ENCODE measurements at regions of chr7 and their contacts with region 1.

Region 1: DNA sequence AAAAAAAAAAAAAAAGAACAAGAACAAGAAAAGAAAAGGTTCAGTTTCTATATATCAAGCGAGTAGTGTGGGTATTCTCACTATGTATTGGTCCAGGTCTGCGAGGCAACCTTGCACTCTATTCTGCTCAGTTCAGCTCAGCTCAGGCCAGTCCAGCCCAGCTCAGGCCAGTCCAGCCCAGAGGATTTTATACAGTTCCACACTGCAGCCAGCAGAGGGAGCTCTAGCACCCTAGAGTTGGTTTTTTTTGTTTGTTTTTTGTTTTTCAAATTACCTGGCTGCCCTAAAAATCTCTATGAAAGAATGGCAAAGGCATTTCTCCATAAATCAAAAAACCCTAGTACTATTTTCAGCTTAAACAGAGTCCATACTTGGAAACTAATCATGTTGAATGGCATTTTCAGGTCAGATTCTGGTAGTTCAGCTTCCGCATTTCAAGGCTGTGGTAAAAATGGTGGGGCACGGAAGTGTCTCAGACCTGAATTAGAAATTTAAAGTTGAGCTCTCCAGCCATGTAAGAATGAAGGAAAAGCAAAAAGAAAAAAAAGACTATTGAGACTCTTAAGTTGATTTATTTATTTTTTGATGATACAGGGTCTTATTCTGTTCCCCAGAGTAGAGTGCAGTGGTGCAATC is 55.2 kb upstream of the GSDME start:
- DNase-seq: peak; percentile 25 to 49 (median 38)
- H3K4me3 ChIP-seq: no peak overlapping the region
- H3K4me3 Mint-ChIP-seq: no peak overlapping the region
- H3K27ac ChIP-seq: no peak overlapping the region
- H3K27ac Mint-ChIP-seq: peak overlapping the region in 2 of 7 donors; percentile 22 to 23
- H3K4me1 ChIP-seq: no peaks in the 10 kb centered on the region
- H3K4me1 Mint-ChIP-seq: peaks cover 0 to 3% (median under 1%) of the 10 kb centered on the region in 4 donors
- H3K27me3 ChIP-seq: no peaks in the 10 kb centered on the region
- H3K27me3 Mint-ChIP-seq: no peaks in the 10 kb centered on the region

Region 2: GRCh38 chr7:24800667-24801066 is 11.8 kb before region 1 on chr7:
- CTCF ChIA-PET with region 1: interaction called, 47 read pairs
- POLR2A ChIA-PET with region 1: no interaction called
- intact Hi-C with region 1: no loop called
- DNase-seq: no peak
- H3K4me3 ChIP-seq: no peak overlapping the region
- H3K4me3 Mint-ChIP-seq: peak overlapping the region in 1 of 8 donors; percentile 40
- H3K27ac ChIP-seq: no peak overlapping the region
- H3K27ac Mint-ChIP-seq: peak overlapping the region in 1 of 7 donors; percentile 13
- H3K4me1 ChIP-seq: peaks cover 4% of the 10 kb centered on the region
- H3K4me1 Mint-ChIP-seq: peaks cover 7 to 12% (median 8%) of the 10 kb centered on the region in 4 donors
- H3K27me3 ChIP-seq: no peaks in the 10 kb centered on the region
- H3K27me3 Mint-ChIP-seq: no peaks in the 10 kb centered on the region

Region 3: DNA sequence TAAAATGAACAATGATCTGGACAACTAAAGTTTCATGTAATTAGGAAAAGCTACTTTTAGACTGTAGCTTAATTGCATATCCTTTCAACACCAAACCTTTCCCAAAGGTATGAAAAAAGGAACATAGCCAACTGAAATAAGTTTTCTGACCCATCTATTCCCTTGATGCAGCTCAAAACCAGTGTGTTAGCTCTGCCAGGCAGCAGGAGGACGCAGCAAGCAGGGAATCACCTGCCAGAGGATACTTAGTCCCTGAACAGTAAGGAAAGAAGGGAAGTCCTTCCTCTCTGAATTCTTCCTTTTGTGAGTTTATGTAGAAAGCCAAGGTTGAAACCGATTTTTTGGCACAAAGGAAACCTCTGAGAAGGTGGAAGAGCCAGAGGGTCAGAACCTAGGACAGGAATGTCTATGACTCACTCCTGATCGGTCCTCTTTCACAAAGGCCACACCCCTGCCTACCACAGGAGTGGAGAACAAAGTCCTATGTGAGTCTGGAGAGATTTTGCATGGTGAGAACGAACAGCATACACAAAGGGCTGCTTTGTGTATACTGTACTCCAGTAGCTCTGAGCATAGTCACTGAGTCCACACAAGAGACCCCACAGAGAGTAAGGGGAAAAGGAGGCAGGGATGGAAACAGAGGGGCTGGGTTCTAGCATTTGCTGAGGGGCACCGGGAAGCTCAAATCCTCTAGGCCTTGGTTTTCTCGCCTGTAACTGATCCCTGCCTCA is 13.7 kb after region 1 on chr7:
- CTCF ChIA-PET with region 1: interaction called, 36 read pairs
- POLR2A ChIA-PET with region 1: interaction called, 4 read pairs
- intact Hi-C with region 1: no loop called
- DNase-seq: no peak
- H3K4me3 ChIP-seq: peak overlapping the region in 1 of 2 donors; percentile 21
- H3K4me3 Mint-ChIP-seq: peak overlapping the region in 7 of 8 donors; percentile 56 to 89 (median 76)
- H3K27ac ChIP-seq: peak overlapping the region; percentile 45
- H3K27ac Mint-ChIP-seq: peak overlapping the region; percentile 87 to 96 (median 91)
- H3K4me1 ChIP-seq: peaks cover 62% of the 10 kb centered on the region
- H3K4me1 Mint-ChIP-seq: peaks cover 51 to 72% (median 65%) of the 10 kb centered on the region in 4 donors
- H3K27me3 ChIP-seq: no peaks in the 10 kb centered on the region
- H3K27me3 Mint-ChIP-seq: no peaks in the 10 kb centered on the region

Region 4: DNA sequence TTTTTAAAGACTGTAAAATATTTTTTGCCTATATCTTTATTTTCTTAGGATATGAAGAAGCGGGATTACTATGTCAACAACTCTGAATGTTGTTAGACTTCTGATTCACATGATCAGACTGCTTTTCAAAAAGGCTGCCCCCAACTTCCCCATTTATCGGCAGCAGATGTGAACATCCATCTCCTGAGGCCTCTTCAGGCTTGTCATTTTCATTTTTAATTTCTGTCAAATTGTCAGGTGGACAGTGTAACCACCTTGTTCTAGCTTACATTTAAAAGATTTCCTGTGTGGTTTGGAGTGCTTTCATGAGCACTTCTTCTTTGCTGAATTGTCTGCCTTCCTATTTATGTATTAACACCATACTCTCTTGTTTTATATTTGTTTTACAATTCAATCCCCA is 23.7 kb after region 1 on chr7:
- CTCF ChIA-PET with region 1: interaction called, 19 read pairs
- POLR2A ChIA-PET with region 1: no interaction called
- intact Hi-C with region 1: no loop called
- DNase-seq: peak in 4 of 5 donors; percentile 16 to 25 (median 20)
- H3K4me3 ChIP-seq: no peak overlapping the region
- H3K4me3 Mint-ChIP-seq: peak overlapping the region; percentile 1 to 76 (median 53)
- H3K27ac ChIP-seq: no peak overlapping the region
- H3K27ac Mint-ChIP-seq: peak overlapping the region; percentile 7 to 86 (median 26)
- H3K4me1 ChIP-seq: peaks cover 25% of the 10 kb centered on the region
- H3K4me1 Mint-ChIP-seq: peaks cover 22 to 40% (median 29%) of the 10 kb centered on the region in 4 donors
- H3K27me3 ChIP-seq: no peaks in the 10 kb centered on the region
- H3K27me3 Mint-ChIP-seq: no peaks in the 10 kb centered on the region

Region 5: GRCh38 chr7:24948739-24949138 is 136.3 kb after region 1 on chr7:
- CTCF ChIA-PET with region 1: interaction called, 12 read pairs
- POLR2A ChIA-PET with region 1: no interaction called
- intact Hi-C with region 1: no loop called
- DNase-seq: no peak
- H3K4me3 ChIP-seq: no peak overlapping the region
- H3K4me3 Mint-ChIP-seq: peak overlapping the region in 5 of 8 donors; percentile 5 to 72 (median 41)
- H3K27ac ChIP-seq: no peak overlapping the region
- H3K27ac Mint-ChIP-seq: peak overlapping the region in 2 of 7 donors; percentile 28 to 38
- H3K4me1 ChIP-seq: peaks cover 53% of the 10 kb centered on the region
- H3K4me1 Mint-ChIP-seq: peaks cover 50 to 93% (median 74%) of the 10 kb centered on the region in 4 donors
- H3K27me3 ChIP-seq: no peaks in the 10 kb centered on the region
- H3K27me3 Mint-ChIP-seq: no peaks in the 10 kb centered on the region

Region 6: DNA sequence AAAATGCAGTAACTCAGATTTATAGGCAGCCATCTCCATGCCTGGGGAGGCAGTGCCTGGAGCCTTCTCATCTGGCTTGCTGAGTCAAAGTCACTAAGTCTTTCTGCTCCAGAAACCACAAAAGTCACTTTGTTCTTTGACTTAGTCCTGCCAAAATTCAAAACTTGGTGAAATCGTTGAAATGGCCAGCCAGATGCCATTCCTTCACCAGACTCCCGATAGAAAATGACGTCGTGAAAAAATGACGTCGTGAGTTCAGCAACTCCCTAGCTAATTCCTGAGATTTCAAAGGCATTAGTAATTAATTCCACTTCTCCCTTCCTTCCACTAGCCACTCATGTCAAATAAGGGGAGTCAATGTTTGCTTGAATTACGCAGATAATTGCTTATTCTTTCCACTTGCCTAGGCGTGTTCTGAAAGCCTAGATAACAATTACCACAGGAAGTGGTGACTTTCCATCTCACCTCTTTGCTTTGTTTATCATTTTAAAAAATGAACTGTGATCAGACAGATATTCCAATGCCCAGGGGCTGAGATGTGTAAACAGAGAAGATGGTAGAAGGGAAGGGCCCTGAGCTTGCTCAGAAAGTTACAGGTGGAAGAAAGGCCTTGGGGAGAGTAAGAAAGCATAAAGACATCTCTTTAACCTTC is 216.1 kb after region 1 on chr7:
- CTCF ChIA-PET with region 1: interaction called, 18 read pairs
- POLR2A ChIA-PET with region 1: interaction called, 3 read pairs
- intact Hi-C with region 1: no loop called
- DNase-seq: peak; percentile 54 to 78 (median 71)
- H3K4me3 ChIP-seq: no peak overlapping the region
- H3K4me3 Mint-ChIP-seq: peak overlapping the region in 7 of 8 donors; percentile 61 to 92 (median 78)
- H3K27ac ChIP-seq: peak overlapping the region; percentile 53
- H3K27ac Mint-ChIP-seq: peak overlapping the region; percentile 67 to 97 (median 94)
- H3K4me1 ChIP-seq: peaks cover 55% of the 10 kb centered on the region
- H3K4me1 Mint-ChIP-seq: peaks cover 25 to 78% (median 62%) of the 10 kb centered on the region in 4 donors
- H3K27me3 ChIP-seq: no peaks in the 10 kb centered on the region
- H3K27me3 Mint-ChIP-seq: peaks cover 0 to 1% of the 10 kb centered on the region in 2 donors

Region 7: DNA sequence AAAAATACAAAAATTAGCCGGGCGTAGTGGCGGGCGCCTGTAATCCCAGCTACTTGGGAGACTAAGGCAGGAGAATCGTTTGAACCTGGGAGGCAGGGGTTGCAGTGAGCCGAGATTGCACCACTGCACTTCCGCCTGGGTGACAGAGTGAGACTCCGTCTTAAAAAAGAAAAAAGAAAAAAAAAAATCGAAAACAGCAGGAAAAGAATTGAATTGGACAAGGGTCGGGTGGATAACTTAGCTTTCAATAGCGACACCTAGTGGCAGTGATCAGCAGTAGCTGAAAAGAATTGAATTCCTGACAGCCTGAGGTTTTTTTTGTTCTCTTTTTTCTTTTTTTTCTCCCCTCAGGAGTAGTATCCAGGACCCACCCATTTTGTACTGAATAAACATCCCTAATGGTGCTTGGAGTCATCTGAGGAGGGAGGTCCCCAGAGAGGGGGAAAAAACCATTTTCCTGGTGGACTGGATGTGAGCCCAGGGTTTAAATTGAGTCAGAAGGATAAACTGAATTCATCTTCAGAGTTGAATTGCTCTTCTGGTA is 257.5 kb after region 1 on chr7:
- CTCF ChIA-PET with region 1: interaction called, 123 read pairs
- POLR2A ChIA-PET with region 1: interaction called, 3 read pairs
- intact Hi-C with region 1: loop called (anchors 1 kb)
- DNase-seq: peak; percentile 43 to 57 (median 54)
- H3K4me3 ChIP-seq: no peak overlapping the region
- H3K4me3 Mint-ChIP-seq: no peak overlapping the region
- H3K27ac ChIP-seq: no peak overlapping the region
- H3K27ac Mint-ChIP-seq: peak overlapping the region in 2 of 7 donors; percentile 44 to 51
- H3K4me1 ChIP-seq: peaks cover 5% of the 10 kb centered on the region
- H3K4me1 Mint-ChIP-seq: peaks cover 0 to 7% (median 4%) of the 10 kb centered on the region in 4 donors
- H3K27me3 ChIP-seq: no peaks in the 10 kb centered on the region
- H3K27me3 Mint-ChIP-seq: no peaks in the 10 kb centered on the region

Measured in CD4-positive, alpha-beta memory T cell (primary cell).